ENCODE measurements at regions of chr4 and their contacts with region 1.

Region 1: DNA sequence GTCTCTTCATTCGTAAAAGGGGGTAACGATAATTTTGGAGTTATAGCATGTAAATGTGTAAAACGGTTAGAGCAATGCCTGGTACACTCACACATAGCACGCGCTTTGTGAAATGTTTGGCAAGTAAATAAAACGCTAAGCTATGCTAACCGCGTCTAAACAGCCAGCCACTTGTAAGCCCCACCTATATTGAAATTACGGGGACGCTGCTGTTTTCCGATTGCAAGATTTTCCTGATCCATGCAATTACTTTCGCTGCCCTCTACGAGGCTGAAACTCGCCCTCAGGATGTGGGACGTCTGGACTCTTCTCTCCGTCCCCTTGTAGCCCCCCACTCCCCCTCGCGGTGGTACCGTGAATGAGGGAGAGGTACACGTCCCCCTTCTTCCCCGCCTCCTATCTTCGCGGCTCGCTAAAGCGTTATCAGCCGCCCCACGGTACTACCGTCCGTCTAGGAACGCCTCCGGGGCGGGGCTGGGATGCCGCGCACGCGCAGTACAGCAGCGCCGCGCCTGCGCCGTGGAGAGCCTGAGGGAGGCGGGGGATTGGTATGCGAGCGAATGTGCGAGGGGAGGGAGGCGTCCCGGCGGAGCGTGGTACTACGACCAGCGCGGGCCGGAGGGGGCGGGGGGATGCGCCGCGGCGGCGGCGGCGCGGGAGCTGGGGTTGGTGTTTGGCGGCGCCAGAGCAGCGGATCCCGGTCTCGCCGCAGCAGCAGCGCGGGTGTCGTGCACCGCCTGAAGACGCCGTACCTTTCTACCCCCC is at the start of gene STIM2:
- DNase-seq: peak; percentile 97
- ATAC-seq: peak; percentile 73
- H3K4me3 Mint-ChIP-seq: peak within 1 kb of the TSS; percentile 86
- H3K27ac Mint-ChIP-seq: peak within 1 kb of the TSS; percentile 95
- H3K4me1 Mint-ChIP-seq: peaks cover 51% of the 10 kb centered on the region
- H3K27me3 Mint-ChIP-seq: no peaks in the 10 kb centered on the region
- total RNA-seq, gene STIM2: 52.3 to 53.3 TPM

Region 2: DNA sequence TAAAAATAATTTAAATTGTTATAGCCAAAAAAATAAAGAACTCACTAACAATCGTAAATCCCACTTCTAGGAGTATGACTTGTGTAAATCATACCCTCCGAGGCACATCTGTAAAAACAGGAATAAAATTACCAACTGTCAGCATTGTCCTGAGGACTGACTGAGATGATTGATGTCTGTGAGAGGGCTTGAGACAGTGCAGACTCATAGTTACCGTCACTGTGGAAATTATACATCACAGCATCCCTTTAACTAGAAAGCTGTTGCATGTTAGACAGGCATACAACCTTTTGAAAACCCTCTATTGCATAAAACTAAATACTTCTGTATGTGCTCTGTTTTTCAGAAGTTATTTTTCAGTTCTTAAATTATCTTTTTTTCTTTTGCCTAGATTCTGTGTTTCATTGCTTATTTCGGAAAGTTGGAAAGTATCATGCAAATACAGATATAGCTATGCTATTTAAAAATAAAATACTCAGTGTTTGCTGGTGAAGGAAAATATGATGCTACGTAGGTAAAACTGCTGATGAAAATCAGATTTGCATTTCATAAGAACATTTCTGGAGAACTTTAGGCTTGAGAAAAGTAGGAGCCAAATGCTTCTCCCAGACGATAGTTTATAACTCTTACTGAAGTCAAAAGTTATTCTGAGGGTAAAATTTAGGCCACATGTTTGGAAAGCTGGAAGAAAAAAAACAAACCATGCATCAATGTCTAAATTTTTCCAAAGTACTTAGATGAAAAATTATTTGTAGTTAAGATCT is 553.1 kb before region 1 on chr4:
- CTCF ChIA-PET with region 1: no interaction called
- POLR2A ChIA-PET with region 1: no interaction called
- DNase-seq: no peak
- ATAC-seq: no peak
- H3K4me3 Mint-ChIP-seq: no peak overlapping the region
- H3K27ac Mint-ChIP-seq: no peak overlapping the region
- H3K4me1 Mint-ChIP-seq: peaks cover 25% of the 10 kb centered on the region
- H3K27me3 Mint-ChIP-seq: no peaks in the 10 kb centered on the region

Region 3: DNA sequence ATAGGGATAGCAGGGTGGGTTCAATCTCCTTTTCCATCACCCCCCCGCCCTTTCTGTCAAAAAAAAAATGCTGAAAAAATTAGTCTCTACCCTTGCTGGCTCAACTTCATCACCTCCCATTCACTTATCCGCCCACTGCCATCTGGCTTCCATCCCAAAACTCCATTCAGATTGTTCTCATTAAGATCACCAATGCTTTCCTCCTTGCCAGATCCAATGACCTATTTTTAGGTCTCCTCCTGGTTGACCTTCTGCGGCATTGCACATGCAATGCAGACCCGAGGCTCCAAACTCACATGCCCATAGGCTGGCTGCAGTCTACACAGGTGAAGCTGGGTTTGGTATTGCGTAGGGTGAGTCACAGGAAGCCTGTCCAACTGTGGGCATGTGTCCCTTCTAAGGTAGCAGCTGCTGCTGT is 20.8 kb before region 1 on chr4:
- CTCF ChIA-PET with region 1: no interaction called
- POLR2A ChIA-PET with region 1: no interaction called
- DNase-seq: no peak
- ATAC-seq: no peak
- H3K4me3 Mint-ChIP-seq: no peak overlapping the region
- H3K27ac Mint-ChIP-seq: no peak overlapping the region
- H3K4me1 Mint-ChIP-seq: peaks cover 5% of the 10 kb centered on the region
- H3K27me3 Mint-ChIP-seq: no peaks in the 10 kb centered on the region

Region 4: DNA sequence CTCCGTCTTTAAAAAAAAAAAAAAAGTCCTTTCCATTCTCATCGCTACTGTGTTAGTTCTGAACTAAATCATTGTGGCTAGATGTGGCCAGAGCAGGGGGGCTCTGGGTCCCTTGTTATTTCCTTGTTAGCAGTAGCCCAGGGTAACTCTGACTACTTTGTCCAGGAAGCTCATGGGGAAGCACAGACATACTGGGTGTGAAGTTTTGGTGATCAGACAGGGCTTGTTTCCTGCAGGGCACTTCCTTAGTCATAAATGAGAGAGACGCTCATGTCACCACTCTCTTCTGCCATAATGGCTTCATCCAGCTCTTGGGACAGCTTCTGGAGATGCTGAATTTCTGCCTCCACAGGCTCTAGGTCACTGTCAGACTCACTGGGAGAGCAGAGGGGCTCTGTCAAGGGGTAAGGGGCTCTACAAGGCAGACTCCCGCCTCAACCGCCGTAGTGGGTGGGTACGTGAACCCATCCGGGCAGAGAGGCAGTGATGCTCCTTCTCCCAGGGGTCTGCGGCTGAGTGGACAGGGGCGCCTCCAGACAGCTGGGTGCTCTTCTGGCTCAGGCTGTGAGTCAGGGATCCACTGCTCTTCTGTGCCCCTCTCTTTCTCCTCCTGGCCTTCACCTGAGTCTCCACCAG is 13.2 kb after region 1 on chr4:
- CTCF ChIA-PET with region 1: interaction called, 6 read pairs
- POLR2A ChIA-PET with region 1: interaction called, 44 read pairs
- DNase-seq: peak; percentile 78
- ATAC-seq: peak; percentile 92
- H3K4me3 Mint-ChIP-seq: peak overlapping the region; percentile 55
- H3K27ac Mint-ChIP-seq: peak overlapping the region; percentile 89
- H3K4me1 Mint-ChIP-seq: peaks cover 66% of the 10 kb centered on the region
- H3K27me3 Mint-ChIP-seq: no peaks in the 10 kb centered on the region

Region 5: GRCh38 chr4:26878794-26879391 is 18.6 kb after region 1 on chr4:
- CTCF ChIA-PET with region 1: interaction called, 39 read pairs
- POLR2A ChIA-PET with region 1: interaction called, 125 read pairs
- DNase-seq: no peak
- ATAC-seq: no peak
- H3K4me3 Mint-ChIP-seq: no peak overlapping the region
- H3K27ac Mint-ChIP-seq: peak overlapping the region; percentile 78
- H3K4me1 Mint-ChIP-seq: peaks cover 67% of the 10 kb centered on the region
- H3K27me3 Mint-ChIP-seq: no peaks in the 10 kb centered on the region

Region 6: GRCh38 chr4:26885912-26886274 is 25.6 kb after region 1 on chr4:
- CTCF ChIA-PET with region 1: interaction called, 39 read pairs
- POLR2A ChIA-PET with region 1: interaction called, 125 read pairs
- DNase-seq: peak; percentile 70
- ATAC-seq: peak; percentile 68
- H3K4me3 Mint-ChIP-seq: peak overlapping the region; percentile 67
- H3K27ac Mint-ChIP-seq: peak overlapping the region; percentile 90
- H3K4me1 Mint-ChIP-seq: peaks cover 79% of the 10 kb centered on the region
- H3K27me3 Mint-ChIP-seq: no peaks in the 10 kb centered on the region

Region 7: GRCh38 chr4:26985873-26986272 is 125.5 kb after region 1 on chr4:
- CTCF ChIA-PET with region 1: interaction called, 4 read pairs
- POLR2A ChIA-PET with region 1: interaction called, 13 read pairs
- DNase-seq: peak; percentile 72
- ATAC-seq: peak; percentile 98
- H3K4me3 Mint-ChIP-seq: peak overlapping the region; percentile 40
- H3K27ac Mint-ChIP-seq: no peak overlapping the region
- H3K4me1 Mint-ChIP-seq: peaks cover 28% of the 10 kb centered on the region
- H3K27me3 Mint-ChIP-seq: no peaks in the 10 kb centered on the region

Region 8: GRCh38 chr4:26992657-26993361 is 132.5 kb after region 1 on chr4:
- CTCF ChIA-PET with region 1: interaction called, 10 read pairs
- POLR2A ChIA-PET with region 1: interaction called, 17 read pairs
- DNase-seq: no peak
- ATAC-seq: peak; percentile 49
- H3K4me3 Mint-ChIP-seq: no peak overlapping the region
- H3K27ac Mint-ChIP-seq: no peak overlapping the region
- H3K4me1 Mint-ChIP-seq: peaks cover 16% of the 10 kb centered on the region
- H3K27me3 Mint-ChIP-seq: no peaks in the 10 kb centered on the region

Region 9: DNA sequence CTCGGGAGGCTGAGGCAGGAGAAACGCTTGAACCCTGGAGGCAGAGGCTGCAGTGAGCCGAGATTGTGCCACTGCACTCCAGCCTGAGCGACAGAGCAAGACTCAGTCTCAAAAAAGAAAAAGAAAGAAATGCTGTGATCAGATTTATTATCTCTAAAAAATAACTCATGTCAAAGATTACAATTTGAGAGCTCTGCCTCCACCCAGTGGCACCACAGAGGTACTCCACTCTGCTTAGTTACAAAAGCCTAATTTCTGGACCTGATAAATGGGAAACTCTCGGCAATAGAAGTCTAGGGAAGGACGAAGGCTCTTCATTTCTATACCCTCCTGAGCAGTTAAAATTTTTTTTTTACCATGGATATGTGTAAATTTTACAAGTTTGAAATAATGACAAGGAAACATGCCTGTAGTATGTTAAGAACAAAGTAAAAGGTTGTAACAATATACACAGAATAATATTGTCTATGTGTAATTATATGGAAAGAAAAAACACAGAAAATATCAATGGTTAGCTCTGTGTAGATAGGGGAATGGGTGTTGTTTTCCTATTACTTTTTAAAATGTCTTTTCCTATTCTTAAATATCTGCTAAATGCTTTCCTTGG is 150.1 kb after region 1 on chr4:
- CTCF ChIA-PET with region 1: interaction called, 16 read pairs
- POLR2A ChIA-PET with region 1: interaction called, 8 read pairs
- DNase-seq: peak; percentile 71
- ATAC-seq: no peak
- H3K4me3 Mint-ChIP-seq: no peak overlapping the region
- H3K27ac Mint-ChIP-seq: no peak overlapping the region
- H3K4me1 Mint-ChIP-seq: peaks cover 5% of the 10 kb centered on the region
- H3K27me3 Mint-ChIP-seq: no peaks in the 10 kb centered on the region